CD4-positive, alpha-beta memory T cell (primary cell): ENCODE measurements at regions of chr3 and their contacts with region 1.

Region 1: GRCh38 chr3:136752422-136753325 is 496 bp upstream of the STAG1 start:
- DNase-seq: peak; percentile 97 to 99 (median 99)
- H3K4me3 ChIP-seq: peak overlapping the region; percentile 72 to 94
- H3K4me3 Mint-ChIP-seq: peak overlapping the region; percentile 87 to 97 (median 94)
- H3K27ac ChIP-seq: peak overlapping the region; percentile 80
- H3K27ac Mint-ChIP-seq: peak overlapping the region; percentile 95 to 99 (median 98)
- H3K4me1 ChIP-seq: peaks cover 44% of the 10 kb centered on the region
- H3K4me1 Mint-ChIP-seq: peaks cover 32 to 53% (median 39%) of the 10 kb centered on the region in 4 donors
- H3K27me3 ChIP-seq: no peaks in the 10 kb centered on the region
- H3K27me3 Mint-ChIP-seq: no peaks in the 10 kb centered on the region

Region 2: DNA sequence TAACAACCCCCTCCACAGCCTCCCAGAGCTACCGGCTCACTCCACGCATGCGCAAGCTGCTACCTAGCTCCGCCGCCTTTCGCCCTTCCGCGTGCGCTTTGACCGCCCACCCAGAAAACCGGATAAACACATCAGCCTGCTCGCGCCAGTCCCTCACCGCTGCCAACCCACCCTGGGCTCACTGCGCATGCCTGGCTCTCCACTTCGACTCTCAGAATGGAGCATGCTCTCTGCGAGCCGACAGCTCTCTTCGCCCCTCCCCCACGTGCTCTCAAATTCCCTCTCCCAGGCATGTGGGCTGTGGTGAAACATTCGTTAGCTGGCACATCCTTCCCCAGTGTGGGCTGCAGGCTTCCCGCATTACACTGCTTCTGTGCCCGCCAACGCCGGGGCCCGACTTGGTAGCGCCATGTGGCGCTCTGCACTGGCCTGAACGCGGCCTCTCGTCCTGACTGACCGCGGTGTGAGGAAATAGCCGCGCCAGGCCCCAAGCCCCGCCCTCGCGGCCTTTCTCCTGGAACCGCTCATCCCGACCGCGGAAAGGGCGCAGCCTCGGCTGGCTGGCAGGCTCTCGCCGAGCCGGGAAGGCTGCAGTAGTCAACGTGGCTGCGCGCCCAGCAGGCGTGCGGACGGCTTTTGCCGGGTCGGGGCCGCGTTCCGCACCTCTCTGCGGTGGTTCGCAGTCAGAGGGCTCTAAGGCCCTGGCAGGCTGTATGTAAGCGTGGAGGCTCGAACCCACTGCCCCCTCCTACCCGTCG is 556.1 kb before region 1 on chr3:
- CTCF ChIA-PET with region 1: interaction called, 76 read pairs
- POLR2A ChIA-PET with region 1: interaction called, 101 read pairs
- intact Hi-C with region 1: loop called (anchors 1 kb)
- DNase-seq: peak; percentile 97 to 98 (median 97)
- H3K4me3 ChIP-seq: peak overlapping the region; percentile 66 to 71
- H3K4me3 Mint-ChIP-seq: peak overlapping the region; percentile 94 to 100 (median 99)
- H3K27ac ChIP-seq: peak overlapping the region; percentile 97
- H3K27ac Mint-ChIP-seq: peak overlapping the region; percentile 98 to 100 (median 100)
- H3K4me1 ChIP-seq: peaks cover 26% of the 10 kb centered on the region
- H3K4me1 Mint-ChIP-seq: peaks cover 24 to 52% (median 34%) of the 10 kb centered on the region in 4 donors
- H3K27me3 ChIP-seq: no peaks in the 10 kb centered on the region
- H3K27me3 Mint-ChIP-seq: peaks cover 3 to 9% of the 10 kb centered on the region in 2 donors

Region 3: DNA sequence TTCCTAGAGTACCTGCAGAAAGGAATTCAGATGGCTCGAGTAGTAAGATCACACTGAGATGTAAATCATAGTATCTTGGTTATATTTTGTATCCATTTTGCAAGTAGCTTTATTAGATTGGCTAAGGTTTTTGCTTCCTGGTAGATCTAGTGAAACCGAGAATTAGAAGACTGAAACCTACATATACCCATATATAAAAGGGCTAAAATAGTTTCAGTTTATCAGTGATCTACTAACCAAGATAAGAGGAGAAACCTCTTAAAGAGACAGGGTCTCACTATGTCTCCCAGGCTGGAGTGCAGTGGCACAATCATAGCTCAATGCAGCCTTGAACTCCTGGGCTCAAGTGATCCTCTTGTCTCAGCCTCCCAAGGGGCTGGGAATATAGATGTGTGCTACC is 367.2 kb before region 1 on chr3:
- CTCF ChIA-PET with region 1: interaction called, 132 read pairs
- POLR2A ChIA-PET with region 1: interaction called, 30 read pairs
- intact Hi-C with region 1: no loop called
- DNase-seq: no peak
- H3K4me3 ChIP-seq: no peak overlapping the region
- H3K4me3 Mint-ChIP-seq: no peak overlapping the region
- H3K27ac ChIP-seq: no peak overlapping the region
- H3K27ac Mint-ChIP-seq: no peak overlapping the region
- H3K4me1 ChIP-seq: no peaks in the 10 kb centered on the region
- H3K4me1 Mint-ChIP-seq: peaks cover 0 to 2% (median 0%) of the 10 kb centered on the region in 4 donors
- H3K27me3 ChIP-seq: no peaks in the 10 kb centered on the region
- H3K27me3 Mint-ChIP-seq: no peaks in the 10 kb centered on the region

Region 4: DNA sequence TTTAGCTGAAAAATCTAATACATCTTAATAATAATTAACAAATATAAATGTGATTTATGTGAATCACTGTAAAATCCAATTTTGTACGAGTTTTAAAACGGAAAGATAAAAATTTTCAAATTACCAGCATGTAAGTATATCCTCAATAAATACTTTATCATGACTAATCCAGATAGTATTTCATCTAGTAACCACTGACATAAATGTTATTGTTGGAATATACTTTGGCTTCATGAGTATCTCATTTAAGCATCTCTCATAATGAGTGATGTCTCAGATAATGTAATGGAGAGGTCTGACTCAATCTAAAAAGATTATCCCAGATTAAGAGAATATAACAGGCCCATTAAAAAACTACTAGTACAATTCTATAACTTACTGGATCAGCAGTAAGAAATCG is 216.8 kb before region 1 on chr3:
- CTCF ChIA-PET with region 1: no interaction called
- POLR2A ChIA-PET with region 1: no interaction called
- intact Hi-C with region 1: no loop called
- DNase-seq: no peak
- H3K4me3 ChIP-seq: no peak overlapping the region
- H3K4me3 Mint-ChIP-seq: no peak overlapping the region
- H3K27ac ChIP-seq: no peak overlapping the region
- H3K27ac Mint-ChIP-seq: no peak overlapping the region
- H3K4me1 ChIP-seq: no peaks in the 10 kb centered on the region
- H3K4me1 Mint-ChIP-seq: peaks cover 0 to 5% (median 3%) of the 10 kb centered on the region in 4 donors
- H3K27me3 ChIP-seq: no peaks in the 10 kb centered on the region
- H3K27me3 Mint-ChIP-seq: no peaks in the 10 kb centered on the region

Region 5: DNA sequence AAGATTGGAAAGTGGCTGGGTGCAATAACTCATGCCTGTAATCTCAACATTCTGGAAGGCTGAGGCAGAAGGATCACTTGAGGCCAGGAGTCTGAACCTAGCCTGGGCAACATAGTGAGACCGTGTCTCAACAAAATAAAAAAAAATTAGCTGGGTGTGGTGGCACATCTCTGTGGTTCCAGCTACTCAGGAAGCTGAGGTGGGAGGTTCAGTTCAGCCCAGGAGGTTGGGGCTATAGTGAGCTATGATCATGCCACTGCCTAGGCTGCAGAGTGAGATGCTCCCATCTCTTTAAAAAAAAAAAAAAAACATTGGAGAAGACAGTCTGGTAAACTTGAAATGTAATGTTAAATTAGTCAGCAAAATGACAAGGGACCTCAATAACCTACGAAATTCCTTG is 58.4 kb before region 1 on chr3:
- CTCF ChIA-PET with region 1: interaction called, 4 read pairs
- POLR2A ChIA-PET with region 1: interaction called, 20 read pairs
- intact Hi-C with region 1: no loop called
- DNase-seq: peak in 4 of 5 donors; percentile 19 to 36 (median 24)
- H3K4me3 ChIP-seq: no peak overlapping the region
- H3K4me3 Mint-ChIP-seq: peak overlapping the region in 6 of 8 donors; percentile 57 to 77 (median 68)
- H3K27ac ChIP-seq: no peak overlapping the region
- H3K27ac Mint-ChIP-seq: peak overlapping the region in 6 of 7 donors; percentile 5 to 79 (median 62)
- H3K4me1 ChIP-seq: peaks cover 34% of the 10 kb centered on the region
- H3K4me1 Mint-ChIP-seq: peaks cover 41 to 79% (median 54%) of the 10 kb centered on the region in 4 donors
- H3K27me3 ChIP-seq: no peaks in the 10 kb centered on the region
- H3K27me3 Mint-ChIP-seq: no peaks in the 10 kb centered on the region

Region 6: GRCh38 chr3:136787349-136787748 is 34.7 kb after region 1 on chr3:
- CTCF ChIA-PET with region 1: interaction called, 7 read pairs
- POLR2A ChIA-PET with region 1: interaction called, 10 read pairs
- intact Hi-C with region 1: no loop called
- DNase-seq: peak; percentile 3 to 42 (median 26)
- H3K4me3 ChIP-seq: no peak overlapping the region
- H3K4me3 Mint-ChIP-seq: no peak overlapping the region
- H3K27ac ChIP-seq: no peak overlapping the region
- H3K27ac Mint-ChIP-seq: peak overlapping the region in 2 of 7 donors; percentile 8 to 67
- H3K4me1 ChIP-seq: peaks cover 9% of the 10 kb centered on the region
- H3K4me1 Mint-ChIP-seq: peaks cover 5 to 10% (median 8%) of the 10 kb centered on the region in 4 donors
- H3K27me3 ChIP-seq: no peaks in the 10 kb centered on the region
- H3K27me3 Mint-ChIP-seq: no peaks in the 10 kb centered on the region

Region 7: DNA sequence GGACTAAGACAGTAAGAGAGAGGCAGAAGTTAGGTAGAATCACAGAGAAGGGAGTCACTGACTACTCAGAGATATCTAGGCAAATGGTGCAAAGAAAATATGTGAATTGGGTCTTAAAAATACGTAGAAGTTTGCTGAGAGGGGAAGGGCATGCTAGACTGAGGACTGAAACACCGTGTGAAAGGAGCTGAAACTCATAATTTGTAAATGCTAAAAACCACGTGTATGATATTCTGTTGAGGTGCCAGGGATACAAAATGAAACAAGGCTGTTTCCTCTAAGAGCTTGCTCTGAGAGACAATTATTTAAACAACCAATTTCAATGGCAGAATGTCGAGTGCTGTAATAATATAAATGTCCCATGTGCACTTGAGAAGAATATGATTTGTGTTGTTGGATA is 156.5 kb after region 1 on chr3:
- CTCF ChIA-PET with region 1: interaction called, 4 read pairs
- POLR2A ChIA-PET with region 1: interaction called, 10 read pairs
- intact Hi-C with region 1: no loop called
- DNase-seq: no peak
- H3K4me3 ChIP-seq: no peak overlapping the region
- H3K4me3 Mint-ChIP-seq: peak overlapping the region; percentile 1 to 67 (median 36)
- H3K27ac ChIP-seq: peak overlapping the region; percentile 2
- H3K27ac Mint-ChIP-seq: peak overlapping the region; percentile 62 to 90 (median 71)
- H3K4me1 ChIP-seq: peaks cover 84% of the 10 kb centered on the region
- H3K4me1 Mint-ChIP-seq: peaks cover 65 to 86% (median 75%) of the 10 kb centered on the region in 4 donors
- H3K27me3 ChIP-seq: no peaks in the 10 kb centered on the region
- H3K27me3 Mint-ChIP-seq: no peaks in the 10 kb centered on the region

Region 8: DNA sequence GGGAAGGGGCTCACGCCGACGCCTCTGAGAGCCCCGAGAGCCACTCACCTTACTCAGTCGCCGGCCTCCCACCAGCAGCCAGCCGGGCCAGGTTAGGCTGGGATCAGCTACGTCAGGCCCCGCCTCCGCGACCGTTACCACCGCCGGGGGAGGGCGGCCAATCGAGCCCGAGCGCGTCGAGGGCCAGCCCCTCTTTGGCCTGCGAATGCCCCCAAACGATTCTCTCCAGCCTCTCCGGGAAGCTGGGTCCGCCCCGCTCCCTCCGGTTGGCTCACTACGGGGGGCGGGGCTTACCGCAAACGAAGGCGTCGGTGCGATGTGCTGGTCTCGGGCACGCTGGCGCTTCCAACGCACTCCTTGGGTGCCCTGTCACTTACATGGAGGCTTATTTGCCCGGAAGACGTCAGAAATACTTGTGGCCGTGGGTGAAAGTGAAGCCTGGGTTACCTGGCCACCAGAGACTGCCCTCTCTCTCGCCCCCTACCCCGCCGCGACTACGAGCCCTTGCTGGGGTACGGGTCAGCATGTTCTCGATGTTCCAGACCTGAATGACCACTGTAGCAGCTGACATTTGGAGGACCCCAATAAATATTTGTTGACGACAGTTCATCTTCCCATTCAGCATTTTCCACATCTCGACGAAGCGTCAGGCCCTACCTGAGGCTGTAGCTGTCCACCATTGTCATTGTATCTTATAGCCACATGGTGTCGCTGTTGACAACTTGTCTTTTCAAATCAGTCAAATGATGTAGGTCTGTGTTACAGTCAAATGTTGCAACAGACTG is 1841.7 kb after region 1 on chr3 and contains the start of gene CEP70:
- CTCF ChIA-PET with region 1: interaction called, 4 read pairs
- POLR2A ChIA-PET with region 1: no interaction called
- intact Hi-C with region 1: loop called (anchors 10 kb)
- DNase-seq: peak; percentile 90 to 93 (median 92)
- H3K4me3 ChIP-seq: peak within 1 kb of the TSS; percentile 94 to 99
- H3K4me3 Mint-ChIP-seq: peak within 1 kb of the TSS; percentile 85 to 97 (median 92)
- H3K27ac ChIP-seq: peak within 1 kb of the TSS; percentile 75
- H3K27ac Mint-ChIP-seq: peak within 1 kb of the TSS; percentile 89 to 100 (median 97)
- H3K4me1 ChIP-seq: peaks cover 5% of the 10 kb centered on the region
- H3K4me1 Mint-ChIP-seq: peaks cover 6 to 12% (median 9%) of the 10 kb centered on the region in 4 donors
- H3K27me3 ChIP-seq: no peaks in the 10 kb centered on the region
- H3K27me3 Mint-ChIP-seq: no peaks in the 10 kb centered on the region
- total RNA-seq, gene CEP70: 27.1 to 28.0 TPM